Activated CD8-positive, alpha-beta T cell treated with anti-CD3 and anti-CD28 coated beads for 36 hours (primary cell): ENCODE measurements at regions of chr2 and their contacts with region 1.

Region 1: DNA sequence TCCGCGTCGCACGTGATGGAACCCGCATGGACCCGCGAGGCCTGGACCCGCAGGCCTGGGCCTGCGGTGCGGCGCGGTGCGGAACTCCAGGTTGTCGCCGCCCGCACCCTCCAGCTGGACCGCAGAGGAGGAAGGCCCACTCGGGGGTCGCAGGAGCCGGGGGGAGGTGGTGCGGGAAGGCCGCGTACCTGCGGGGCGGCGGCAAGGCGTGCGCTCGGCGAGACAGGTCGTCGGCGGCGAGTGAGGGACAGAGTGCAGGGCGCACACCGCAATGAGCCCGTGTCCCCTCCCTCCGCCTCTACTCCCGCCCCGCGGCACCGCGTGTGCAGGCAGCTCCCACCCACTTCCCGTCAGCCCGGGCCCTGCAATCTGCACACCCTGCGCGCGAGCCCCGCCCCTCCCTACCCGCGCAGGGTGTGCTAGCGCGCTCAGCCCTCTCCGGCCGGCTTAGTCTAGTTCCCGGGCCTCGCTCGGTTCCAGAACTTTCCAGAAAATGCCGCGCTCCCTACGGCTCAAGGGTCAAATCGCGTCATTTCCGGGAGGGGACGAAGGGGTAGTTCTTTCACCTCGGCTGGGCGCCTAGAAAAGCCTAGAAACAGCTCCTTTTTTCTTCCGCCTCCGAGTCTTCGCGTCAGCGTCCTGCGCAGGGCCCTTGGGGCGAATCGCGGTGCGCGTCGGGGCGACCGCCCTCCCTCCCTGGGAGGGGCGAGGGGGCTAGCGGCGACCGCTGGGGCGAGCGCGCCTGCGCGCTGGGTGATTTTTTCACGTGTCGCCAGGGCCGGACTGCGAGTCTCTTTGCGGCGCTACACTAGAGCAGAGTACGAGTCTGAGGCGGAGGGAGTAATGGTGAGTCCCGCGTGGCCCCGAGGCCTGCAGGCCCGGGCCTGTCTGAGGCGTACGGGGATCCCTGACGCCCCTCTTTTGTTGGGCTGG is at the starts of genes HSPD1 and HSPE1:
- DNase-seq: peak; percentile 99
- ATAC-seq: peak; percentile 89
- H3K4me3 Mint-ChIP-seq: peak within 1 kb of the TSS; percentile 100
- H3K27ac Mint-ChIP-seq: peak within 1 kb of the TSS; percentile 99
- H3K4me1 Mint-ChIP-seq: peaks cover 48% of the 10 kb centered on the region
- H3K27me3 Mint-ChIP-seq: no peaks in the 10 kb centered on the region
- CTCF ChIP-seq: no peak
- total RNA-seq, gene HSPD1: 1,034 to 1,051 TPM
- total RNA-seq, gene HSPE1: 345 to 356 TPM

Region 2: GRCh38 chr2:197293252-197294007 is 206.4 kb before region 1 on chr2:
- CTCF ChIA-PET with region 1: no interaction called
- POLR2A ChIA-PET with region 1: no interaction called
- intact Hi-C with region 1: no loop called
- DNase-seq: peak; percentile 69
- ATAC-seq: peak; percentile 73
- H3K4me3 Mint-ChIP-seq: peak overlapping the region; percentile 81
- H3K27ac Mint-ChIP-seq: peak overlapping the region; percentile 95
- H3K4me1 Mint-ChIP-seq: peaks cover 86% of the 10 kb centered on the region
- H3K27me3 Mint-ChIP-seq: no peaks in the 10 kb centered on the region
- CTCF ChIP-seq: no peak

Region 3: DNA sequence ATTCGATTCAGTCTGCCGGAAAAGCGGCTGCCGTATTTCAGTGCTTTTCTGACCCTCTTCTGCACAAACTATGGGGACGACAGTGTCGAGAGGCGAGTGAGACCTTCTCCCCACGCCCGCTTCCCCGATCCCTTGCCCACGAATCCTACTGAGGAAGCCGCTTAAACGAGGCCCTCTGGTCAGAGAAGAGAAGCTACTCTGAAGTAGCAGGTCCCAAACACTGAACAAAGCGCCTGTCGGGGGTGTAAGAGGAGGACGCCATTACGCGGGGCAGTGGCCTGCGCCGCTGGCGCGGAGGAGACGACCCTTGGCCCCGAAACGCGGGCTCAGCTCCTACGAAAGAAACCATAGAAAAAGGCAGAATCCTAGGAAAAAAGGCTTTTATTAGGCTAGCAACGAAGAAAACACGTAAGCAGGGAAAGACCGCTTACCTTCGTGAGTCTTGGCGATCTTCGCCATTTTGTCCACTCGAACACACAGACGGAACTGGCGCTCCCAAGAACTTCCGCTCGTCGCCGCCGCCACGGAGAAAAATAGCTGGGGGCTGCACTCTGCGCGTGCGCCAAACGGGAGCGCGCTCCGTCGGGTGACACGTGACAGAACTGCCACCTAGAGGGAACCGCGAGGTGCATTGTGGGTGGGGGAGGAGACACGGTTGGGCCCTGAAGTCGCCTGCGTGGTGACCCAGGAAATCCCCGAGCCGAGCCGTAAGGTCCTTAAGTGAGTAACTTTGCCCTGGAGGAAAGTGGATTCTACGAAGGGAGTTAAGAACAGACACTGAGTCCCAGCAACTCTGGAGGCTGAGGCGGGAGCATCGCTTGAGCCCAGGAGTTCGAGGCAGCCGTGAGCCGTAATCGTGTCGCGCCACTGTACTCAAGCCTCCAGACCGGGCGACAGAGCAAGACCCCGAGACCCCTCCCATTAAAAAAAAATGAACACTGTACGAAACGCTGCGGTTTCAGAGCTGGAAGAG is 65.0 kb before region 1 on chr2 and contains the start of gene SF3B1:
- CTCF ChIA-PET with region 1: no interaction called
- POLR2A ChIA-PET with region 1: interaction called, 37 read pairs
- intact Hi-C with region 1: loop called (anchors 5 kb)
- DNase-seq: peak; percentile 100
- ATAC-seq: peak; percentile 96
- H3K4me3 Mint-ChIP-seq: peak within 1 kb of the TSS; percentile 82
- H3K27ac Mint-ChIP-seq: peak within 1 kb of the TSS; percentile 100
- H3K4me1 Mint-ChIP-seq: peaks cover 37% of the 10 kb centered on the region
- H3K27me3 Mint-ChIP-seq: no peaks in the 10 kb centered on the region
- CTCF ChIP-seq: no peak
- total RNA-seq, gene SF3B1: 235 to 253 TPM

Region 4: GRCh38 chr2:197453161-197453914 is 46.5 kb before region 1 on chr2 and contains the start of gene COQ10B:
- CTCF ChIA-PET with region 1: interaction called, 3 read pairs
- POLR2A ChIA-PET with region 1: interaction called, 6 read pairs
- intact Hi-C with region 1: loop called (anchors 2 kb)
- DNase-seq: peak; percentile 99
- ATAC-seq: peak; percentile 92
- H3K4me3 Mint-ChIP-seq: peak within 1 kb of the TSS; percentile 92
- H3K27ac Mint-ChIP-seq: peak within 1 kb of the TSS; percentile 99
- H3K4me1 Mint-ChIP-seq: peaks cover 43% of the 10 kb centered on the region
- H3K27me3 Mint-ChIP-seq: no peaks in the 10 kb centered on the region
- CTCF ChIP-seq: no peak
- total RNA-seq, gene COQ10B: 14.0 to 14.6 TPM

Region 5: DNA sequence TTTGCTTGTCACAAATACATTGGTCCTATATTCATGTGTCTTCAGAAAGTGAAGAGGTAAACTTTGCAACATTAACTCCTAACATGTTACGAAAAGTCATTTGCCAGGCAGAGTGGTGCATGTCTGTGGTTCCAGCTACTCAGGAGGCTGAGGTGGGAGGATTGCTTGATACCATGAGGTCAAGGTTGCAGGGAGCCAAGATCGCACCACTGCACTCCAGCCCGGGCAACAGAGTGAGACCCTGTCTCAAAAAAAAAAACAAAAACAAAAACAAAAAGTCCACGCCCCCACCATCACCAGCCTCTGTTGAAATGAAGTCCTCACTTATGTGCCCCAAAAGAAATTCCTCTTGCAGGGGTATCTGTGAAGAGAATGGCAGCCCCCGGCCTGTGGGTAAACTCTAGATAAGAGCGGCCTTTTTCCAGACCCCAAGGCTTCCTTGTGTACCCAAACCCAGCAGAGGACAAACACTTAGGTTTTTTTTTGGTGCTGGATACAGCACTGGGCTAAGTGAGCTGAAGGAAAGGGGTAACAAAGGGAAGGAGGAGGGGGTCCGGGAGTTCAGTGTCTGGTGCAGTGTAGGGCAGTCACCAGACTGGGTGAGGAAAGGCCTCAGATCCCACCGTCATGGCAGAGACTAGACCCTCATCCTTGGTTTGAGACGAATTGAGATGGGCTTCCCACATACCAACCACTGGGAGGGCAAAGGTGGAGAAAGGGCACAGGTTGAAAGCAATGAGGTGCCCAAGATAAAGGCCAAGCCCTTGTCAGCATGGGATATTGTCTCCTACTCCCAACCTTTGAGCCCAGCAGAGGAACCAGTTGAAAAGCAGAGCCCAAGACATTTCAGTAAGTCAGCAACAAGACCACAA is 19.5 kb before region 1 on chr2:
- CTCF ChIA-PET with region 1: no interaction called
- POLR2A ChIA-PET with region 1: interaction called, 22 read pairs
- intact Hi-C with region 1: no loop called
- DNase-seq: no peak
- ATAC-seq: no peak
- H3K4me3 Mint-ChIP-seq: no peak overlapping the region
- H3K27ac Mint-ChIP-seq: no peak overlapping the region
- H3K4me1 Mint-ChIP-seq: no peaks in the 10 kb centered on the region
- H3K27me3 Mint-ChIP-seq: no peaks in the 10 kb centered on the region
- CTCF ChIP-seq: no peak

Region 6: DNA sequence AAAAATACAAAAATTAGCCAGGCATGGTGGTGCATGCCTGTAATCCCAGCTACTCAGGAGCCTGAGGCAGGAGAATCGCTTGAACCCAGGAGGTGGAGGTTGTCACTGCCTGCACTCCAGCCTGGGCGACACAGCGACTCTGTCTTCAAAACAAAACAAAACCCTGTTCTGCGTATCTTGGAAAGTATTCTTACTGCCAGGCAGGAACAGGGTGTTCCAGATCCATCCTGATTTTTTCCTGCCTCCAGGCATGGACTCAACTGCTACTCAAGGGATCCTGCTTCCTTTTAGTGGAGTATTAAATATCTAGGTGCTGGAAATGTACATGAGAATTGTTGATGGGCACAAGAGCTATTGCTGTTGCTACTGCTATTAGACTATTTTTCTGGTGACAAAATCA is 12.5 kb before region 1 on chr2:
- CTCF ChIA-PET with region 1: interaction called, 4 read pairs
- POLR2A ChIA-PET with region 1: interaction called, 77 read pairs
- intact Hi-C with region 1: no loop called
- DNase-seq: no peak
- ATAC-seq: no peak
- H3K4me3 Mint-ChIP-seq: no peak overlapping the region
- H3K27ac Mint-ChIP-seq: peak overlapping the region; percentile 70
- H3K4me1 Mint-ChIP-seq: peaks cover 31% of the 10 kb centered on the region
- H3K27me3 Mint-ChIP-seq: no peaks in the 10 kb centered on the region
- CTCF ChIP-seq: no peak

Region 7: GRCh38 chr2:197515739-197516392 is 16.0 kb after region 1 on chr2 and contains the start of gene MOB4:
- CTCF ChIA-PET with region 1: interaction called, 13 read pairs
- POLR2A ChIA-PET with region 1: interaction called, 81 read pairs
- intact Hi-C with region 1: loop called (anchors 2 kb)
- DNase-seq: peak; percentile 94
- ATAC-seq: peak; percentile 96
- H3K4me3 Mint-ChIP-seq: peak within 1 kb of the TSS; percentile 99
- H3K27ac Mint-ChIP-seq: peak within 1 kb of the TSS; percentile 92
- H3K4me1 Mint-ChIP-seq: peaks cover 33% of the 10 kb centered on the region
- H3K27me3 Mint-ChIP-seq: no peaks in the 10 kb centered on the region
- CTCF ChIP-seq: no peak
- total RNA-seq, gene MOB4: 15.1 to 15.9 TPM

Region 8: GRCh38 chr2:197705121-197705911 is 205.5 kb after region 1 on chr2 and contains the start of gene MARS2:
- CTCF ChIA-PET with region 1: interaction called, 3 read pairs
- POLR2A ChIA-PET with region 1: interaction called, 19 read pairs
- intact Hi-C with region 1: no loop called
- DNase-seq: peak; percentile 92
- ATAC-seq: peak; percentile 84
- H3K4me3 Mint-ChIP-seq: peak within 1 kb of the TSS; percentile 78
- H3K27ac Mint-ChIP-seq: peak within 1 kb of the TSS; percentile 98
- H3K4me1 Mint-ChIP-seq: peaks cover 36% of the 10 kb centered on the region
- H3K27me3 Mint-ChIP-seq: no peaks in the 10 kb centered on the region
- CTCF ChIP-seq: no peak
- total RNA-seq, gene MARS2: 15.3 to 16.7 TPM